HEK293T (cell line): ENCODE measurements at regions of chr19 and their contacts with region 1.

Region 1: DNA sequence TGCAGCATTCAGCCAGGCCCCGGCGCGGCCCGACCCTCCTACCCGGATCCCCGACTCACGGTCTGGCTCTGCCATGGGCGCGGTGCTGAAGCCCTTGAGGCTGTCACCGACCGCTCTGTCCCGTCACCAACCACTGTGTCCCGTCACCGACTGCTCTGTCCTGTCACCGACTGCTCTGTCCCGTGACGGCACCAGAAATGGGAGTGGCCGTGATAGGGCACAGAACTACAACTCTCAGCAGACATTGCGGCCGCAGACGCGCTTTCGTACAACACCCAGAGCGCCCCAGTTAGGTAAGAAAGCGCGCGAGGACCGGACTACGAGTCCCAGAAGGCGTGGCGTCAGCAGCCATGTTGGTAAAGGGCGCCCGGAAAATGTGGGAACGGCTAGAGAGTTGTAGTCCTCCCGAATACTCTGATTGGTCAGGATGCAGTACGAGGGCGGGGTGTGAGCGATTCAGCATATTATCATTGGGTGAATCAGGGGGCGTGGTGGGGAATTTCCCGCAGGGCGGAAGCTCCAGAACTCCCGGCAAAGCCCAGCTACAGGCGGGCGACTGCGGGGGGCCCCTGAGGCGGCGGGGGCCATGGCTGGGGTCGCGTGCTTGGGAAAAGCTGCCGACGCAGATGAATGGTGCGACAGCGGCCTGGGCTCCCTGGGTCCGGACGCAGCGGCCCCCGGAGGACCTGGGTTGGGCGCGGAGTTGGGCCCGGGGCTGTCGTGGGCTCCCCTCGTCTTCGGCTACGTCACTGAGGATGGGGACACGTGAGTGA is at the starts of genes NFKBIB and SIRT2:
- DNase-seq: peak; percentile 97

Region 2: GRCh38 chr19:38929929-38930775 is 30.5 kb after region 1 on chr19 and contains the start of gene SARS2:
- CTCF ChIA-PET with region 1: interaction called, 5 read pairs
- POLR2A ChIA-PET with region 1: interaction called, 14 read pairs
- DNase-seq: peak; percentile 98